ENCODE measurements at regions of chr11 and their contacts with region 1.

Region 1: GRCh38 chr11:73752216-73752867 is 8.5 kb downstream of the RAB6A start:
- DNase-seq: no peak
- H3K4me3 ChIP-seq: no peak overlapping the region
- H3K4me3 Mint-ChIP-seq: no peak overlapping the region
- H3K27ac ChIP-seq: no peak overlapping the region
- H3K27ac Mint-ChIP-seq: peak overlapping the region in 5 of 7 donors; percentile 12 to 84 (median 26)
- H3K4me1 ChIP-seq: peaks cover 14 to 27% of the 10 kb centered on the region in 2 donors
- H3K4me1 Mint-ChIP-seq: peaks cover 39% of the 10 kb centered on the region
- H3K27me3 ChIP-seq: no peaks in the 10 kb centered on the region
- H3K27me3 Mint-ChIP-seq: peaks cover 0 to 3% (median 0%) of the 10 kb centered on the region in 3 donors
- CTCF ChIP-seq: no peak

Region 2: DNA sequence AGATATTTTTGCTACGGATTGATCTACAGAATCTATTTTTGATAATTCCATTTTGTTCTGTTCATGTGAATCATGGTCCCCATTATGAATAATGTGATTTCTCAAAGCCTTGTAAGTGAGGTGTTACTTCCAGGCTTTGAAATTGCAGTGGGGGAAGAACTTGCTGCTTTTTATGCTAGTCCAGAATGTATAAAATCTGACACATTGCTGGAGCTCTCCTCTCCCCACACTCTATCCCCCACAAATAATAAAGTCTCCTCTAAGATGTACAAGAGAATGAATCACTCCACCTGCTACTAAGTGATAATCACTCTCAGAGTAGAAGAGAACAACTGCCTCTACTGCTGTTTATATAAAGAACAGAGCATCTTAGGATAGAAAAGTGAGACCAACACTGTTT is 14.4 kb after region 1 on chr11:
- intact Hi-C with region 1: no loop called
- DNase-seq: no peak
- H3K4me3 ChIP-seq: no peak overlapping the region
- H3K4me3 Mint-ChIP-seq: no peak overlapping the region
- H3K27ac ChIP-seq: no peak overlapping the region
- H3K27ac Mint-ChIP-seq: no peak overlapping the region
- H3K4me1 ChIP-seq: peaks cover under 1 to 3% of the 10 kb centered on the region in 2 donors
- H3K4me1 Mint-ChIP-seq: peaks cover 4% of the 10 kb centered on the region
- H3K27me3 ChIP-seq: no peaks in the 10 kb centered on the region
- H3K27me3 Mint-ChIP-seq: peaks cover 0 to 13% (median 0%) of the 10 kb centered on the region in 3 donors
- CTCF ChIP-seq: no peak

Region 3: DNA sequence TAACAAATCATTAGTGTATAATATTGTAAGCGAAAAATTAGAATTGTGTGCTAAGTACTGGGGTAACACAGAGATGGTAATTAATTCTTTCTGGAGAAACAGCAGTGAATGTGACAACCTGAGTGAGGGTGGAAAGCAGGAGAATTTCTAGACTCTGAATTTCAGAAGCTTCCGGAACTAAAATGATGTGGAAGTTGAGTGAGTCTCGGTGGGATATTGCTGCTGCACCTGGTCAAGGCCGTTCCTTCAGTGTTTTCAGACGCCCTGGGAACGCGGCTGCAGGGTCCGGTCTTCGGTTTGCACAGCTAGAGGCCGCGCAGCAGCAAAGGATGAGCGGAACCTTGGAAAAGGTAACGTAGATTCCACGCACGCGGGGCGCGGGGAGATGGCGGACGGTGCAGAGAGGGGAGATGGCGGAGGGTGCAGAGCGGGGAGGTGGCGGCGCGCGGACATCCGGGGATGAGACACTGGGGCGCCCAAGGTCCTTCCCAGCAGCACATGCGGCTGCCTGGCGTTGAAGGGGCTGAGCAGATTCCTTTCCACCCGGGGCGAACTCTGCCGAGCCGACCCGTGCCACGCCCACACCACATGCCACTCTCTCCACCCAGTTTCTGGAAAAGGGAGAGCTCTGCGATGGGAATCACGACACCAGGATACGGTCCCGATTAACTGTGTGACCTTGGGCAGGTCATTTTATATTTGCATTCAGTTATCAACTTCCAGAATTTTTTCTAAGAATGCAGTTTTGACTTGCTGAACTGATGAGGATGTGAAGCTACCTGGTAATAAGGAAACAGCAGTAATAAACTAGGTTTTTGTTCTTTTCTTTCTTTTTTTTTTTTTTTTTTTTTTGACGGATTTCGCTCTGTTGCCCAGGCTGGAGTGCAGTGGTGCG is 35.5 kb after region 1 on chr11 and contains the start of gene MRPL48:
- intact Hi-C with region 1: loop called in 1 of 2 experiments (anchors 5 kb)
- DNase-seq: peak; percentile 71 to 86 (median 75)
- H3K4me3 ChIP-seq: peak within 1 kb of the TSS; percentile 60 to 95 (median 95)
- H3K4me3 Mint-ChIP-seq: peak within 1 kb of the TSS; percentile 99 to 100
- H3K27ac ChIP-seq: peak within 1 kb of the TSS; percentile 78 to 90
- H3K27ac Mint-ChIP-seq: peak within 1 kb of the TSS; percentile 89 to 98 (median 98)
- H3K4me1 ChIP-seq: peaks cover 13 to 21% of the 10 kb centered on the region in 2 donors
- H3K4me1 Mint-ChIP-seq: peaks cover 6% of the 10 kb centered on the region
- H3K27me3 ChIP-seq: no peaks in the 10 kb centered on the region
- H3K27me3 Mint-ChIP-seq: peaks cover 0 to 2% (median 1%) of the 10 kb centered on the region in 3 donors
- CTCF ChIP-seq: no peak
- polyA plus RNA-seq, gene MRPL48: 17.8 to 43.1 (median 42.9) TPM